CD14-positive monocyte (primary cell): ENCODE measurements at regions of chr19 and their contacts with region 1.

Region 1: DNA sequence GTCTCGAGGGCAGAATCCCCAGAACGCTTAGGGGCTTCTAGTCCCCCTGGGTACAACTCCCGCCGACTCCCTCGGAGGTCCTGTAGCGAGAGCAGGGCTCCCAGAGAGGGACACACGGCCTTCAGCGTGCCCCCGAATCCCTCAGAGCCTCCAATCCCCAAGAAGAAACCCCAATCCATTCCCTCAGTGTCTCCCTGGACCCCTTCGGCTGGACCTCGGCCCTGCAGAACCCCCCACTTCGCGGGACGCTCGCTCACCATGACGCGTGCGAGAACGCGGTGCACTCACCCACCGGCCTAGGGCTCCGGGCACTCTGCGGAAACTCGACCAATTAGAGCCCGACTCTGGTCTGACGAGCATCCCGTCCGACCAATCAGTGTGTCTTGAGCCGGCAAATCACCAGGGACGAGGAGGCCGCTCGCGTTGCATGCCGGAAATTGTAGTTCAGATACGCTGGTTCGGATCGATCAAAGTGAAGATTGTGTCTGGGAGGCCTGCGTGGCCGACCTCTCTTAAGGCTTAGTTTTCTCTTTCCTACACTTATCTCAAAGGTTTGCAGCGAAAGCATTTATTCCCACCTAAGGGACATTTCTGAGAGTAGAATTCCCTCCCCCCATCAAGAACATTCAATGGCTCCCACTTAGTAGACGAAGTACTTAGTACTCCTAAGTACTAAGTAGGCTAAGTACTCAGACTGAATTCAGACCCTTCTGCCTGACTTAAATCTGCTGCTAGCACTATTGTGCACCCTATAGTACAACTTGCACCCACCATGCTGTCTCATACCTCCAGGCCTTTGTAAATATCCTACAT is at the start of gene TMEM161A:
- DNase-seq: peak; percentile 96 to 97 (median 96)
- H3K4me3 ChIP-seq: peak within 1 kb of the TSS; percentile 29 to 79 (median 63)
- H3K4me3 Mint-ChIP-seq: peak within 1 kb of the TSS; percentile 88 to 97
- H3K27ac ChIP-seq: peak within 1 kb of the TSS in 1 of 2 donors; percentile 76
- H3K27ac Mint-ChIP-seq: peak within 1 kb of the TSS; percentile 60 to 91 (median 82)
- H3K4me1 ChIP-seq: peaks cover 19 to 21% of the 10 kb centered on the region in 2 donors
- H3K4me1 Mint-ChIP-seq: peaks cover 28% of the 10 kb centered on the region
- H3K27me3 ChIP-seq: no peaks in the 10 kb centered on the region
- H3K27me3 Mint-ChIP-seq: peaks cover 8 to 10% (median 10%) of the 10 kb centered on the region in 3 donors
- CTCF ChIP-seq: no peak
- polyA plus RNA-seq, gene TMEM161A: 14.3 to 22.5 (median 15.3) TPM

Region 2: GRCh38 chr19:19053508-19054314 is 84.7 kb before region 1 on chr19:
- intact Hi-C with region 1: loop called (anchors 5 kb)
- DNase-seq: peak; percentile 37 to 58 (median 50)
- H3K4me3 ChIP-seq: no peak overlapping the region
- H3K4me3 Mint-ChIP-seq: no peak overlapping the region
- H3K27ac ChIP-seq: no peak overlapping the region
- H3K27ac Mint-ChIP-seq: peak overlapping the region in 1 of 7 donors; percentile 54
- H3K4me1 ChIP-seq: no peaks in the 10 kb centered on the region
- H3K4me1 Mint-ChIP-seq: peaks cover 2% of the 10 kb centered on the region
- H3K27me3 ChIP-seq: no peaks in the 10 kb centered on the region
- H3K27me3 Mint-ChIP-seq: peaks cover 0 to 2% (median 0%) of the 10 kb centered on the region in 3 donors
- CTCF ChIP-seq: peak; percentile 90